Ovary (tissue), 10 donors: ENCODE measurements at regions of chr10 and their contacts with region 1.

Region 1: GRCh38 chr10:43105102-43105785 is 28.4 kb downstream of the RET start:
- DNase-seq: peak; percentile 71 to 86 (median 79)
- H3K4me3 ChIP-seq: peak overlapping the region; percentile 44
- H3K27ac ChIP-seq: no peak overlapping the region
- H3K4me1 ChIP-seq: peaks cover 6% of the 10 kb centered on the region
- H3K27me3 ChIP-seq: no peaks in the 10 kb centered on the region
- CTCF ChIP-seq: peak; percentile 94 to 98 (median 96)
- EP300 ChIP-seq: no peak
- POLR2A ChIP-seq: no peak

Region 2: GRCh38 chr10:42753126-42753506 is 352.1 kb before region 1 on chr10:
- intact Hi-C with region 1: loop called in 2 of 4 experiments (anchors 5 to 10 kb)
- DNase-seq: peak; percentile 61 to 86 (median 63)
- H3K4me3 ChIP-seq: peak overlapping the region; percentile 54
- H3K27ac ChIP-seq: no peak overlapping the region
- H3K4me1 ChIP-seq: peaks cover 8% of the 10 kb centered on the region
- H3K27me3 ChIP-seq: no peaks in the 10 kb centered on the region
- CTCF ChIP-seq: peak; percentile 25 to 78 (median 36)
- EP300 ChIP-seq: no peak
- POLR2A ChIP-seq: no peak

Region 3: GRCh38 chr10:42866115-42866995 is 238.9 kb before region 1 on chr10:
- intact Hi-C with region 1: loop called (anchors 5 to 10 kb)
- DNase-seq: peak; percentile 38 to 85 (median 73)
- H3K4me3 ChIP-seq: no peak overlapping the region
- H3K27ac ChIP-seq: no peak overlapping the region
- H3K4me1 ChIP-seq: peaks cover 2% of the 10 kb centered on the region
- H3K27me3 ChIP-seq: no peaks in the 10 kb centered on the region
- CTCF ChIP-seq: peak; percentile 28 to 30 (median 30)
- EP300 ChIP-seq: no peak
- POLR2A ChIP-seq: no peak

Region 4: GRCh38 chr10:42875792-42876460 is 229.3 kb before region 1 on chr10:
- intact Hi-C with region 1: loop called in 2 of 4 experiments (anchors 10 kb)
- DNase-seq: no peak
- H3K4me3 ChIP-seq: no peak overlapping the region
- H3K27ac ChIP-seq: no peak overlapping the region
- H3K4me1 ChIP-seq: no peaks in the 10 kb centered on the region
- H3K27me3 ChIP-seq: no peaks in the 10 kb centered on the region
- CTCF ChIP-seq: no peak
- EP300 ChIP-seq: no peak
- POLR2A ChIP-seq: no peak

Region 5: DNA sequence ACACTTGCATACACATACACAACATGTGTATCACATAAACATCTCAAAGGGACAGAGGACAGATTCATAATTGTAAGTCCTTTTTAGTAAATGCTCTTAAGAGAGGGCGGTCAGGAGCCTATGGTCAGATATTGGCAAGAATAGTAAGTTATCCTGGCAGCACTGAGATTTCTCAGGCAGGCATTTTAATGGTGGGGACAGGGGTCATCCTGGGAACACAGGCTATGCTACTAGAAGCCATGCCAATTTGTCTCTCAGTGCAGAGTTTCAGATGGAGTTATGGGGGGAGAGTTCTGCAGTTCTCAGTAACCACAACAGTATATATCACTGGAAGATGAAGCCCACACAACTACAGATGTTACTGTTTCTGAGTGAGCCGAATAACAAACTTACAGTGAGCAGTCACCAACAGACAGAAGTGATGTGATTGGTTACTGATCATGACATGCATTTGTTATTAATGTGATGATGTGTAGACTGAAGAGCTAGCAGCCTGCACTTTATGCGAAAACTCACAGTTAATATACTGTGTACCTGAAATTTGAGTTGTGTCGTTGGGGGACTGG is 348.1 kb after region 1 on chr10:
- intact Hi-C with region 1: no loop called
- DNase-seq: no peak
- H3K4me3 ChIP-seq: no peak overlapping the region
- H3K27ac ChIP-seq: no peak overlapping the region
- H3K4me1 ChIP-seq: peaks cover 2% of the 10 kb centered on the region
- H3K27me3 ChIP-seq: no peaks in the 10 kb centered on the region
- CTCF ChIP-seq: no peak
- EP300 ChIP-seq: no peak
- POLR2A ChIP-seq: no peak